Caco-2 (cell line): ENCODE measurements at regions of chr5 and their contacts with region 1.

Region 1: DNA sequence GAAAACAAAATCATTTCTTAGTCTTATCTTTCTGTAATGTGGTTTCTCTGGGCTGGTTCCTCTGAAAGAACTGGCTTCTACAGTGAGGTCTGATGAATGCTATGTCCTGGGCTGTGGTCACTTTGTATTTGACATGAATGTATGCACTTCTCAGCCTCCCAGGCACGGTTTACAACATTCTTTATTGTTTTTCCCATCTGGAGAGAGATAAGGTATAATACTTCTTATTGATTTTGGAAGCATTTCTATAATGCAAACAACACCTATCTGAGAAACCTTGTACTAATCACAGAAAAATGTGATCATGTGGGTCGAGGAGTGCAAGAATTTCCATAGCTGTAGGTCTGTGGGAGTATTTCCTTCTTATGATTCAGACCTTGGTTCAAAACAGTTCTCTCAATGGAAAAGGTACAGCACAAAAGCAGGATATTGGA is 46.9 kb downstream of the ACTBL2 start:
- DNase-seq: peak; percentile 72 to 80
- H3K4me3 ChIP-seq: no peak overlapping the region
- H3K4me3 Mint-ChIP-seq: no peak overlapping the region
- H3K27ac Mint-ChIP-seq: peak overlapping the region; percentile 38
- H3K4me1 ChIP-seq: peaks cover 34% of the 10 kb centered on the region
- H3K4me1 Mint-ChIP-seq: peaks cover 27% of the 10 kb centered on the region
- H3K27me3 ChIP-seq: no peaks in the 10 kb centered on the region
- H3K27me3 Mint-ChIP-seq: no peaks in the 10 kb centered on the region
- CTCF ChIP-seq: no peak

Region 2: DNA sequence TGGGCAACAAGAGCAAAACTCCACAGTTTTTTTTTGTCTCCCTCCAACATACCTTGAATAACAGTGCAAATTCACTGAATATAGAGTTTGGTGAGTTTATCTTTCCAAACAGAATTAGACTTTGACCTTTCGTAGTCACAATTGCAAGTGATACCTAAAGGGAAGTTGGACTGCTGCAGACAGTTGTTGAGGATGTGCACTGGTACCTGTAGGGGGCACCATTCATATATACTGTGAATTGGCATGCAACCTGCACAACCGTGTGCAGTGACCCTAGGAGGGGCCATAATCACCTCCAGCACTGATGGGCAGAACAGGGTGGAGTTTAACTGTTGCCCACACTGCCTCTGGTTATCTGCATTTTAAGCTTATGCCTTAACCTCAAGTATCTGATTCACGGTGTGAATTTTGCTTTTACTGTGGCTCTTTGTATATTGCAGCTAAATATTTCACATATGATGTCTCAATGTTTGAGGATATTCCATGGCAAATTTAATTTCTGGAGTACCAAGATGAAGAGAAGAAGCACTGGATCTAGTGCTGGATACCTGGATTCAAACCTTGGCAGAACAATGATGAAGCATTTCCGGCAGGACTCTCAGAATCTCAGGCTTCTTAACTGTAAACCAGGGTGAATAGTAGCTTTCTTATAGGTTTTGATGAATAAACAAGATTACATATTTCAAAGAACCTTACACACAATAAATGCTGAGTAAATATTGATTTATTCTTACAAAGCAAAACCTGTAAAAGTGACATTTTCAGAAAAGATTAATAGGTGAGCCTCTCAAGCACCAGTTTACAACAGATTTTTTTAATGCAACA is 97.4 kb before region 1 on chr5:
- CTCF ChIA-PET with region 1: no interaction called
- POLR2A ChIA-PET with region 1: no interaction called
- intact Hi-C with region 1: loop called (anchors 5 kb)
- DNase-seq: peak; percentile 54 to 58
- H3K4me3 ChIP-seq: no peak overlapping the region
- H3K4me3 Mint-ChIP-seq: peak overlapping the region; percentile 35
- H3K27ac Mint-ChIP-seq: peak overlapping the region; percentile 61
- H3K4me1 ChIP-seq: peaks cover 51% of the 10 kb centered on the region
- H3K4me1 Mint-ChIP-seq: peaks cover 17% of the 10 kb centered on the region
- H3K27me3 ChIP-seq: no peaks in the 10 kb centered on the region
- H3K27me3 Mint-ChIP-seq: no peaks in the 10 kb centered on the region
- CTCF ChIP-seq: peak; percentile 41 to 46

Region 3: GRCh38 chr5:57360871-57361270 is 74.8 kb before region 1 on chr5:
- CTCF ChIA-PET with region 1: no interaction called
- POLR2A ChIA-PET with region 1: no interaction called
- intact Hi-C with region 1: no loop called
- DNase-seq: no peak
- H3K4me3 ChIP-seq: no peak overlapping the region
- H3K4me3 Mint-ChIP-seq: no peak overlapping the region
- H3K27ac Mint-ChIP-seq: no peak overlapping the region
- H3K4me1 ChIP-seq: no peaks in the 10 kb centered on the region; the same call in 1 of the 2 replicates
- H3K4me1 Mint-ChIP-seq: no peaks in the 10 kb centered on the region
- H3K27me3 ChIP-seq: no peaks in the 10 kb centered on the region
- H3K27me3 Mint-ChIP-seq: no peaks in the 10 kb centered on the region
- CTCF ChIP-seq: no peak

Region 4: GRCh38 chr5:57383093-57383861 is 52.4 kb before region 1 on chr5:
- CTCF ChIA-PET with region 1: no interaction called
- POLR2A ChIA-PET with region 1: no interaction called
- intact Hi-C with region 1: loop called (anchors 2 kb)
- DNase-seq: peak; percentile 76 to 79
- H3K4me3 ChIP-seq: no peak overlapping the region
- H3K4me3 Mint-ChIP-seq: peak overlapping the region; percentile 16
- H3K27ac Mint-ChIP-seq: peak overlapping the region; percentile 60
- H3K4me1 ChIP-seq: peaks cover 20% of the 10 kb centered on the region
- H3K4me1 Mint-ChIP-seq: peaks cover 16% of the 10 kb centered on the region
- H3K27me3 ChIP-seq: no peaks in the 10 kb centered on the region
- H3K27me3 Mint-ChIP-seq: no peaks in the 10 kb centered on the region
- CTCF ChIP-seq: peak; percentile 24 to 41

Region 5: GRCh38 chr5:57416249-57416994 is 19.3 kb before region 1 on chr5:
- CTCF ChIA-PET with region 1: no interaction called
- POLR2A ChIA-PET with region 1: no interaction called
- intact Hi-C with region 1: loop called (anchors 1 kb)
- DNase-seq: peak in 1 of 2 experiments; percentile 42
- H3K4me3 ChIP-seq: no peak overlapping the region
- H3K4me3 Mint-ChIP-seq: no peak overlapping the region
- H3K27ac Mint-ChIP-seq: peak overlapping the region; percentile 81
- H3K4me1 ChIP-seq: peaks cover 30% of the 10 kb centered on the region
- H3K4me1 Mint-ChIP-seq: peaks cover 15% of the 10 kb centered on the region
- H3K27me3 ChIP-seq: no peaks in the 10 kb centered on the region
- H3K27me3 Mint-ChIP-seq: no peaks in the 10 kb centered on the region
- CTCF ChIP-seq: no peak

Region 6: GRCh38 chr5:57456531-57457135 is 20.9 kb after region 1 on chr5:
- CTCF ChIA-PET with region 1: no interaction called
- POLR2A ChIA-PET with region 1: no interaction called
- intact Hi-C with region 1: loop called (anchors 1 kb)
- DNase-seq: no peak
- H3K4me3 ChIP-seq: no peak overlapping the region
- H3K4me3 Mint-ChIP-seq: no peak overlapping the region
- H3K27ac Mint-ChIP-seq: peak overlapping the region; percentile 53
- H3K4me1 ChIP-seq: peaks cover 28% of the 10 kb centered on the region
- H3K4me1 Mint-ChIP-seq: peaks cover 16% of the 10 kb centered on the region
- H3K27me3 ChIP-seq: no peaks in the 10 kb centered on the region
- H3K27me3 Mint-ChIP-seq: no peaks in the 10 kb centered on the region
- CTCF ChIP-seq: no peak

Region 7: GRCh38 chr5:57976506-57976905 is 540.8 kb after region 1 on chr5:
- CTCF ChIA-PET with region 1: no interaction called
- POLR2A ChIA-PET with region 1: no interaction called
- intact Hi-C with region 1: no loop called
- DNase-seq: no peak
- H3K4me3 ChIP-seq: no peak overlapping the region
- H3K4me3 Mint-ChIP-seq: no peak overlapping the region
- H3K27ac Mint-ChIP-seq: no peak overlapping the region
- H3K4me1 ChIP-seq: peaks cover 8% of the 10 kb centered on the region
- H3K4me1 Mint-ChIP-seq: no peaks in the 10 kb centered on the region
- H3K27me3 ChIP-seq: no peaks in the 10 kb centered on the region
- H3K27me3 Mint-ChIP-seq: no peaks in the 10 kb centered on the region
- CTCF ChIP-seq: no peak